Gastrocnemius medialis (tissue), 4 donors: ENCODE measurements at regions of chr11 and their contacts with region 1.

Region 1: GRCh38 chr11:85627998-85628770 is at the start of gene TMEM126B:
- DNase-seq: peak; percentile 98
- ATAC-seq: peak; percentile 91 to 93
- H3K4me3 ChIP-seq: peak within 1 kb of the TSS; percentile 69 to 99 (median 86)
- H3K27ac ChIP-seq: peak within 1 kb of the TSS; percentile 90 to 98 (median 95)
- H3K4me1 ChIP-seq: peaks cover 28 to 33% of the 10 kb centered on the region in 2 donors
- H3K27me3 ChIP-seq: no peaks in the 10 kb centered on the region
- CTCF ChIP-seq: no peak
- POLR2A ChIP-seq: peak; percentile 86 to 92
- total RNA-seq, gene TMEM126B: 13.6 to 38.6 (median 28.6) TPM

Region 2: GRCh38 chr11:85647604-85648299 is 19.6 kb after region 1 on chr11 and contains the start of gene TMEM126A:
- in situ Hi-C with region 1: no loop called
- intact Hi-C with region 1: loop called (anchors 1 kb)
- DNase-seq: peak; percentile 81 to 86
- ATAC-seq: peak; percentile 96
- H3K4me3 ChIP-seq: peak within 1 kb of the TSS; percentile 65 to 80 (median 72)
- H3K27ac ChIP-seq: peak within 1 kb of the TSS; percentile 80 to 89 (median 88)
- H3K4me1 ChIP-seq: peaks cover 14 to 19% of the 10 kb centered on the region in 2 donors
- H3K27me3 ChIP-seq: no peaks in the 10 kb centered on the region
- CTCF ChIP-seq: no peak
- POLR2A ChIP-seq: peak; percentile 34 to 56
- total RNA-seq, gene TMEM126A: 23.9 to 46.8 (median 35.3) TPM

Region 3: GRCh38 chr11:85685820-85686459 is 57.8 kb after region 1 on chr11 and contains the start of gene CCDC89:
- in situ Hi-C with region 1: no loop called
- intact Hi-C with region 1: loop called (anchors 1 kb)
- DNase-seq: peak; percentile 75 to 84
- ATAC-seq: peak; percentile 99 to 100
- H3K4me3 ChIP-seq: peak within 1 kb of the TSS; percentile 49 to 65 (median 58)
- H3K27ac ChIP-seq: peak within 1 kb of the TSS; percentile 55 to 71 (median 62)
- H3K4me1 ChIP-seq: peaks cover 14 to 17% of the 10 kb centered on the region in 2 donors
- H3K27me3 ChIP-seq: no peaks in the 10 kb centered on the region
- CTCF ChIP-seq: no peak
- POLR2A ChIP-seq: no peak
- total RNA-seq, gene CCDC89: 0.29 TPM in 1 of 4 donors, not detected in the others

Region 4: GRCh38 chr11:86068951-86069407 is 440.8 kb after region 1 on chr11 and contains the start of gene PICALM:
- in situ Hi-C with region 1: loop called in 1 of 4 experiments (anchors 25 kb)
- intact Hi-C with region 1: loop called (anchors 2 kb)
- DNase-seq: peak; percentile 98
- ATAC-seq: peak; percentile 79 to 81
- H3K4me3 ChIP-seq: peak within 1 kb of the TSS; percentile 80 to 100 (median 90)
- H3K27ac ChIP-seq: peak within 1 kb of the TSS; percentile 97 to 100 (median 98)
- H3K4me1 ChIP-seq: peaks cover 32 to 35% of the 10 kb centered on the region in 2 donors
- H3K27me3 ChIP-seq: no peaks in the 10 kb centered on the region
- CTCF ChIP-seq: peak in 2 of 5 experiments; percentile 54 to 67
- POLR2A ChIP-seq: peak; percentile 81 to 90
- total RNA-seq, gene PICALM: 82.3 to 125 (median 107) TPM

Region 5: GRCh38 chr11:86671682-86672621 is 1043.8 kb after region 1 on chr11 and contains the start of gene ME3:
- in situ Hi-C with region 1: no loop called
- intact Hi-C with region 1: loop called (anchors 5 kb)
- DNase-seq: peak; percentile 53 to 75
- ATAC-seq: peak; percentile 79 to 80
- H3K4me3 ChIP-seq: peak within 1 kb of the TSS; percentile 64 to 95 (median 90)
- H3K27ac ChIP-seq: peak within 1 kb of the TSS; percentile 88 to 98 (median 96)
- H3K4me1 ChIP-seq: peaks cover 26 to 54% of the 10 kb centered on the region in 2 donors
- H3K27me3 ChIP-seq: no peaks in the 10 kb centered on the region
- CTCF ChIP-seq: peak in 1 of 5 experiments; percentile 22
- POLR2A ChIP-seq: peak; percentile 41 to 54
- total RNA-seq, gene ME3: 4.2 to 17.0 (median 15.7) TPM